ENCODE measurements at regions of chr18 and their contacts with region 1.

Region 1: GRCh38 chr18:70442933-70443332 is 154.1 kb downstream of the SOCS6 start:
- DNase-seq: no peak
- CTCF ChIP-seq: no peak

Region 2: GRCh38 chr18:70454704-70455322 is 11.9 kb after region 1 on chr18:
- CTCF ChIA-PET with region 1: interaction called, 18 read pairs
- POLR2A ChIA-PET with region 1: no interaction called
- DNase-seq: peak; percentile 54
- CTCF ChIP-seq: peak; percentile 67

Region 3: GRCh38 chr18:71001597-71001996 is 558.7 kb after region 1 on chr18:
- CTCF ChIA-PET with region 1: no interaction called
- POLR2A ChIA-PET with region 1: no interaction called
- DNase-seq: no peak
- CTCF ChIP-seq: no peak

Measured in GM10248 (cell line).